Endothelial cell of umbilical vein (primary cell): ENCODE measurements at regions of chr3 and their contacts with region 1.

Region 1: DNA sequence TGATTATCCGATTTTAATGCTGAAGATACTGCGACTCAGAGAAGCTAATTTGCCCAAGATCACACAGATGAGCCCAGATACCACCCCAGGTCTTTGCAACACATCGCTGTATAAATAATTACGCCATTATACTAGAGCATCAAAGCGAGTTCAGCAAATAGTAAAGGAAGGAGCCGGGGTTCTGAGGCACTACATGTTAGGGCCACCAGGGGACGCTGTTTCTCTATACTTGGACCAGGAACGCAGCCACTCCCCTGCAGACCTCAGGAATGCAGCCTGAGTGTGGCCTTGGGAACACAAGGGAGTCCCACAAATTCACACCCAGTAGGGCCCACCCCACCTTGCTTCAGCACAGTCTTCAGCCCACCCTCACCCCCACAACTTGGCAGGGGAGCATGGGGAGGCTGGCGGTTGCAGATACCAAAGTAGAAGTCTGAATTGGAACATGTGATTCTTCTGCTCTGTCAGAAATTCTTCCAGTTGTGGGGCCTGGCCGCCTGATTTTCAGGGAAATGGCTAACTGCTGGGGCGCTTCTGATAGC is 57.8 kb upstream of the RYK start:
- DNase-seq: peak; percentile 84
- H3K4me3 ChIP-seq: no peak overlapping the region
- H3K27ac ChIP-seq: no peak overlapping the region
- H3K4me1 ChIP-seq: peaks cover 3% of the 10 kb centered on the region
- H3K27me3 ChIP-seq: peaks cover 0 to 6% of the 10 kb centered on the region in 2 experiments
- CTCF ChIP-seq: peak; percentile 95 to 97
- POLR2A ChIP-seq: no peak

Region 2: GRCh38 chr3:134357261-134358184 is 49.1 kb after region 1 on chr3:
- CTCF ChIA-PET with region 1: interaction called, 32 read pairs
- POLR2A ChIA-PET with region 1: interaction called, 63 read pairs
- dilution Hi-C with region 1: no loop called
- intact Hi-C with region 1: loop called (anchors 1 kb)
- DNase-seq: no peak
- H3K4me3 ChIP-seq: no peak overlapping the region
- H3K27ac ChIP-seq: no peak overlapping the region
- H3K4me1 ChIP-seq: peaks cover 13% of the 10 kb centered on the region
- H3K27me3 ChIP-seq: no peaks in the 10 kb centered on the region
- CTCF ChIP-seq: no peak
- POLR2A ChIP-seq: peak; percentile 4

Region 3: GRCh38 chr3:134364061-134364935 is 55.9 kb after region 1 on chr3:
- CTCF ChIA-PET with region 1: interaction called, 44 read pairs
- POLR2A ChIA-PET with region 1: interaction called, 63 read pairs
- dilution Hi-C with region 1: no loop called
- intact Hi-C with region 1: no loop called
- DNase-seq: peak; percentile 94
- H3K4me3 ChIP-seq: no peak overlapping the region
- H3K27ac ChIP-seq: peak overlapping the region; percentile 83
- H3K4me1 ChIP-seq: peaks cover 64% of the 10 kb centered on the region
- H3K27me3 ChIP-seq: no peaks in the 10 kb centered on the region
- CTCF ChIP-seq: no peak
- POLR2A ChIP-seq: peak; percentile 76

Region 4: GRCh38 chr3:134406331-134407238 is 98.2 kb after region 1 on chr3:
- CTCF ChIA-PET with region 1: no interaction called
- POLR2A ChIA-PET with region 1: no interaction called
- dilution Hi-C with region 1: no loop called
- intact Hi-C with region 1: no loop called
- DNase-seq: peak; percentile 28
- H3K4me3 ChIP-seq: peak overlapping the region in 2 of 3 experiments; percentile 5 to 29
- H3K27ac ChIP-seq: no peak overlapping the region
- H3K4me1 ChIP-seq: no peaks in the 10 kb centered on the region
- H3K27me3 ChIP-seq: peaks cover 48 to 58% of the 10 kb centered on the region in 2 experiments
- CTCF ChIP-seq: no peak
- POLR2A ChIP-seq: no peak

Region 5: GRCh38 chr3:134449277-134449676 is 140.9 kb after region 1 on chr3:
- CTCF ChIA-PET with region 1: interaction called, 5 read pairs
- POLR2A ChIA-PET with region 1: no interaction called
- dilution Hi-C with region 1: no loop called
- intact Hi-C with region 1: loop called (anchors 1 kb)
- DNase-seq: peak; percentile 11
- H3K4me3 ChIP-seq: no peak overlapping the region
- H3K27ac ChIP-seq: no peak overlapping the region
- H3K4me1 ChIP-seq: peaks cover 23% of the 10 kb centered on the region
- H3K27me3 ChIP-seq: peaks cover 0 to 6% of the 10 kb centered on the region in 2 experiments
- CTCF ChIP-seq: peak; percentile 32 to 45
- POLR2A ChIP-seq: no peak